ENCODE measurements at regions of chr2 and their contacts with region 1.

Region 1: DNA sequence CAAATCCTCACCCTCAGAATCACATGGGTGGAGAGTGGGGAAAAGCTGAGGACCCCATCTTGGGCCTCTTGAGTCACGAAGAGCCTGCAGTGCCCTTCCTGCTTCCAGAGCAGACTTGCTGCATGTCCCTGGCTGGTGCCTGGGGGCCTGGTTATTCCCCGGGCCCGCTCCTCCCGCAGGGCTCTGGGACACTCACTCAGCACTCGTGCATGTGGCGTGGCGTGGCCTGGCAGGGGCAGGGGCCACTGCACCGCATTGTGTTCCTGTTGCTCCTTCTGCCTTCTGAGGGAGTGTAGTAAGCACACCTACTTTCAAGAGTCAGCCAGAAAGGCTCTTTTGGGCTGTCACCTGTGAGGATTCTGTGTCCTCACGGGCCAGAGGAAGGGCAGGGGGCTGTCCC is 17.4 kb upstream of the MZT2A start:
- DNase-seq: no peak
- H3K4me3 ChIP-seq: no peak overlapping the region
- H3K4me1 ChIP-seq: no peaks in the 10 kb centered on the region
- H3K27me3 ChIP-seq: no peaks in the 10 kb centered on the region

Region 2: GRCh38 chr2:130169896-130170295 is 1339.7 kb before region 1 on chr2:
- in situ Hi-C with region 1: loop called (anchors 5 kb)
- DNase-seq: no peak
- H3K4me3 ChIP-seq: no peak overlapping the region
- H3K4me1 ChIP-seq: no peaks in the 10 kb centered on the region
- H3K27me3 ChIP-seq: no peaks in the 10 kb centered on the region

Region 3: GRCh38 chr2:131394147-131394931 is 115.3 kb before region 1 on chr2:
- in situ Hi-C with region 1: no loop called
- DNase-seq: no peak
- H3K4me3 ChIP-seq: no peak overlapping the region
- H3K4me1 ChIP-seq: no peaks in the 10 kb centered on the region
- H3K27me3 ChIP-seq: no peaks in the 10 kb centered on the region

Measured in HAP-1 (cell line).